Psoas muscle (tissue), 8 donors: ENCODE measurements at regions of chr6 and their contacts with region 1.

Region 1: DNA sequence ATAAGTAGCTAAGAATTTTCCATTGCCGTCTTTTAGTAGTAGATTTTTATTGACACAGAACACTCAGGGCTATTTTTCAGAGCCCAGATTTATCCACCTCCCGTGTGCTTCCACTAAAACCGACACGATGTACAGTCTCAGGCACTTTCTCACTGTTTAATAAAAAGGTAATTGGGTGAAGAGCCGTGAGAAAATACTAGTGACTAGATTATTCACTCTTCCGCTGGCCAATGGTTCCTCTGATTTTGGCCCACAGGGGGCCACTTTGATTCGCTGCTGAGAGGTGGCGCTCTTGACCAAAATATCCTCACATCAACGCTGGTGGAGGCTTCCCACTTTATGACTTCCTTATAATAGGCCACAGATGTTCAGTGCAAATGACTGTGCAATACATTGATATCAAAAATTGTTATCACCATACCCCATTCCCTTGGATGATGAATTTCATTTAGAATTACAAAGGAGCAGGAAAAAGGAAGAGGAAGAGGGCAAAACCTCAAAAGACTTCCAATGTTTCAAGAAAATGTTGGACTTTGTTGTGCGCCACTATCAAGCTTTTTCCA is 12.3 kb upstream of the HDDC2 start:
- DNase-seq: peak; percentile 45 to 67
- ATAC-seq: peak; percentile 80 to 94 (median 86)
- H3K4me3 ChIP-seq: no peak overlapping the region
- H3K27ac ChIP-seq: no peak overlapping the region
- H3K4me1 ChIP-seq: no peaks in the 10 kb centered on the region
- H3K27me3 ChIP-seq: no peaks in the 10 kb centered on the region
- CTCF ChIP-seq: peak; percentile 85

Region 2: DNA sequence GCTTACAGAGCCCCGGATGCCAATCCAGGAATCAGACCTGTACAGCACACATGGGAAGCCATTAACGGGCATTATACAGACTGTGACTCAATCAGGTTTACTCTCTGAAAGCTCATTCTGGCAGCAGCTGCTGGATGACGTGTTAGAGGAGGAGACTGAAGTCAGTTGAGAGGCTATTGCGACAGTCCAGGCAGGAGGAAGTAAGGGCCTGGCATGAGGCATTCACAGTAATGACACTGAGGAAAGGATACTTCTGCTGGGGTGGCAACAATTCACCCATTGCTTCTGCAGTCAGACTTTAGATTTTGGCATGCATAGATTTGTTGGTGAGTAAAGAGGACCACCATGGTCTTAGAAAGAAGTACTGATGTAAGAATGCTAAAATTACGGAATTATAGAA is 284.3 kb after region 1 on chr6:
- intact Hi-C with region 1: loop called (anchors 10 kb)
- DNase-seq: peak; percentile 79 to 94
- ATAC-seq: peak; percentile 88 to 95 (median 92)
- H3K4me3 ChIP-seq: peak overlapping the region; percentile 32
- H3K27ac ChIP-seq: peak overlapping the region; percentile 92
- H3K4me1 ChIP-seq: peaks cover 29% of the 10 kb centered on the region
- H3K27me3 ChIP-seq: no peaks in the 10 kb centered on the region
- CTCF ChIP-seq: no peak

Region 3: DNA sequence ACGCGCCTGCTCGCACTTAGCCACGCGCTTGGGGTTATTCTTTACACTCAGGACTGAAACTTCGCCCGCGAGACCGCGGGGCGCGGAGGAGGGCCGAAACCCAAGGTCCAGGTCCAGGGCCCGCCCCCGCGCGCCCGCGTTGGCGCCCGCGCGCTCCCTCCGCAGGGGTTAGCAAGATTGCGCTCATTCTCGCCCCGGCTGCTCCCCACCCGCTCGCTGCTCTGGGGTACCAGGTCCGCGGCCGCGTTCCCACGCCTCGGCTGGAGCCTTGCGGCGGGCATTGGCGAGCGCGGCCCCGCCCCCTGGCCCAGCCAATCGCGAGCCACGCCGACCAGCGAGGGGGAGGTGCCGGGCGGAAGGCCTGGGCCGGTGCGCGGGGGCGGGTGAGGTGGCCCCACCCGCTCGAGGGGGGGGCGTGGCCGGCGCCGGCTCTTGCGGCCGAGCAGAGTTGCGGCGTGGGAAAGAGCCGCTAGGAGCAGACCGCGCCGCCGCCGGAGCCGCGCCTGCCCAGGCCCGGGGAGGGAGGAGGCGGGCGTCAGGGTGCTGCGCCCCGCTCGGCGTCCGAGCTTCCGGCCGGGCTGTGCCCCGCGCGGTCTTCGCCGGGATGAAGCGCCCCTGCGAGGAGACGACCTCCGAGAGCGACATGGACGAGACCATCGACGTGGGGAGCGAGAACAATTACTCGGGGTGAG is 435.2 kb after region 1 on chr6 and contains the start of gene HEY2:
- intact Hi-C with region 1: loop called (anchors 5 kb)
- DNase-seq: peak; percentile 96 to 97
- ATAC-seq: peak; percentile 84 to 93 (median 91)
- H3K4me3 ChIP-seq: peak within 1 kb of the TSS; percentile 89
- H3K27ac ChIP-seq: peak within 1 kb of the TSS; percentile 98
- H3K4me1 ChIP-seq: peaks cover 5% of the 10 kb centered on the region
- H3K27me3 ChIP-seq: no peaks in the 10 kb centered on the region
- CTCF ChIP-seq: no peak
- total RNA-seq, gene HEY2: 4.4 to 80.5 (median 7.5) TPM

Region 4: DNA sequence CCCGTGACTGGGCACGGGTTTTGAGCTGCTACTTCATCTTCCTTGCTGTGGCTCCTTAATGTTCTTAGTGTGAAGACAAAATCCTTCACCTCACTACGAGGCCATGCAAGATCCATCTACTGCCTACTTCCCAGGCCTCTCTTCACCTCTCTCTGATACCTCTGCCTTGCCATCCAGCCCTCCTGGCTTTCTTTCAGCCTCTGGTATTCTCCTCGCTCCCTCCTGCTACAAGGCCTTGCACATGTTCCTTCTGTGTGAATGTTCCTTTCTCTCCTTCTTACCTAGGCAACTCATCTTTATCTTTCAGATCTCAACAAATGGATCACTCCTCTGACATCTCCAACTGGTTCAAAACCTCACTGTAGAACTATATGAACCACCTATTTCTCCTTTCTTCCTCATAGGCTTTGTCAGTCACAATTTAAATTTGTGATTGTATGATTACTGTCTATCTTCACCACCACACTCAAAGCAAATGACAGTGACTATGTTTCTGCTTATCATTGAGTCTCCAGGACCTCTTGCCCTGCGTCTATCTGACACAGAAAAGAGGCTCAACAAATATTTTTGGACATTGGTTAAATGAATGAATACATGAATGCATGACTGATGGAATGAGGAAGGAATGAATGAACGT is 455.2 kb after region 1 on chr6:
- intact Hi-C with region 1: loop called (anchors 1 to 5 kb)
- DNase-seq: no peak
- ATAC-seq: peak in 2 of 4 donors; percentile 5 to 38
- H3K4me3 ChIP-seq: no peak overlapping the region
- H3K27ac ChIP-seq: no peak overlapping the region
- H3K4me1 ChIP-seq: no peaks in the 10 kb centered on the region
- H3K27me3 ChIP-seq: no peaks in the 10 kb centered on the region
- CTCF ChIP-seq: no peak

Region 5: DNA sequence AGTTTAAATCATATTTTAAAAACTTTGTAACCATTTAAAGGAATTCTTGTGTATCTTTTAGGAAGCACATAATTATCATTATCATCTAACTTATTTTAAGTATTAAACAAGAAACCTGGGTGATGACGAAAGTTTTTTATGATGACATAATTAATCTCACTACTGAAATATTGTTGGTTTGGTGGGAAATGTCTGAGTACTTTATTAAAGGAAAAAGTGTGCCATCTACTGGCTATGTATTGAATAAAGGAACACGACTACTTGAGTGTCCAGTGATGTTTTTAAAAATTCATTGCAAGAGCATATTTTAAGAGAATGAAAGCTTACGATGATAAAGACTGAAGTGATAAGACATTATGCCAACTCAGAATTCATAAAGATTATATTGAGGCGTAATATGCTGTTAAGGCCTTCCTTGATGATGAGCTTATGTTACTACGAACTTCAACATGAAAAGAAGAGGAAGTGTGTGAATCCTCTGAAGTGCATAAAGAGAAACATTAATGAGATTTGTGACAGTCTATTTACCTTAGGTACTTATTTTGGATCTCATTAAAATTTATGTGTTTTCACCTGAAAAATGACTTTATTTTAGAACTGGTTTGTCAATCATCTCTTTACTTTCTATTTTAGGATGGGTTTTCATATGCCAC is 660.2 kb after region 1 on chr6:
- intact Hi-C with region 1: loop called in 1 of 2 experiments (anchors 2 kb)
- DNase-seq: no peak
- ATAC-seq: peak in 1 of 4 donors; percentile 74
- H3K4me3 ChIP-seq: no peak overlapping the region
- H3K27ac ChIP-seq: no peak overlapping the region
- H3K4me1 ChIP-seq: no peaks in the 10 kb centered on the region
- H3K27me3 ChIP-seq: no peaks in the 10 kb centered on the region
- CTCF ChIP-seq: peak; percentile 48